Left colon (tissue), 2 donors: ENCODE measurements at regions of chr20 and their contacts with region 1.

Region 1: GRCh38 chr20:23622839-23623343 is 14.9 kb downstream of the CST3 start:
- DNase-seq: peak; percentile 51 to 65
- ATAC-seq: peak; percentile 93

Region 2: GRCh38 chr20:23350196-23350903 is 272.5 kb before region 1 on chr20 and contains the start of gene NXT1:
- intact Hi-C with region 1: loop called in 1 of 2 experiments (anchors 10 kb)
- DNase-seq: peak; percentile 94 to 98
- ATAC-seq: peak; percentile 91
- total RNA-seq, gene NXT1: 8.5 to 10.0 TPM

Region 3: DNA sequence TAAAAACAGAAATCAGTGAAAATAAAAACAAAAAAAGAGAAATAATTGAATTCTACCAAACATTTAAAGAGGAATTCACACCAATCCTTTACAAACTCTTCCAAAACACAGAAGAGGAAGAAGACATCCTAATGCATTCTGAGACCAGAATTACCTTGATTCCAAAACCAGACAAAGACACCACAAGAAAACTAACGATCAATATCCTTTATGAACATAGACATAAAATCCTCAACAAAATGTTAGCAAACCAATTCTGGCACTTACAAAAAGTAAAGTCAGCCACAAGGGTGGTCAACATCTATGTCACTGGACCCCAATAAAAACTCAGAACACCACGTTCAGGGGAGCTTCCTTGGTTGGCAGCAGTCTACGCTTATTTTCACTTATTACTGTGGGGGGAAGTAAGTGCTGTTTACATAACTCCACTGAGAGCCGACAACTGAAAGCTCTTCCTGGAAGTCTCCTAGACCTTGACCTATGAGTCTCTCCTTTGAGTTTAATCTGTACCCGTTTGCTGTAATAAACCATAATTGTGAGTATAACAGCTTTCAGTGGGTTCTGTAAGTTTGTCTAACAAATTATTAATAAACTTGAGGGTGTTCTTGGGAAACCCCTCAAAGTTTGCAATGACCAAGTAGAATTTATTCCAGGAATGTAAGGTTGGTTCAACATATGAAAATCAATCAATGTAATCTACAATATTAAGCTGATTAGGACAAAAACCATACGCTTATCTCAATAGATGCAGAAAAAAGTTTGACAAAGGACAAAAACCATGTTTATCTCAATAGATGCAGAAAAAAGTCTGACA is 236.4 kb before region 1 on chr20:
- intact Hi-C with region 1: no loop called
- DNase-seq: no peak
- ATAC-seq: peak; percentile 97

Region 4: GRCh38 chr20:23565503-23566045 is 57.3 kb before region 1 on chr20:
- intact Hi-C with region 1: no loop called
- DNase-seq: no peak
- ATAC-seq: no peak

Region 5: GRCh38 chr20:23710771-23711170 is 87.9 kb after region 1 on chr20:
- intact Hi-C with region 1: no loop called
- DNase-seq: no peak
- ATAC-seq: no peak